ENCODE measurements at regions of chr1 and their contacts with region 1.

Region 1: DNA sequence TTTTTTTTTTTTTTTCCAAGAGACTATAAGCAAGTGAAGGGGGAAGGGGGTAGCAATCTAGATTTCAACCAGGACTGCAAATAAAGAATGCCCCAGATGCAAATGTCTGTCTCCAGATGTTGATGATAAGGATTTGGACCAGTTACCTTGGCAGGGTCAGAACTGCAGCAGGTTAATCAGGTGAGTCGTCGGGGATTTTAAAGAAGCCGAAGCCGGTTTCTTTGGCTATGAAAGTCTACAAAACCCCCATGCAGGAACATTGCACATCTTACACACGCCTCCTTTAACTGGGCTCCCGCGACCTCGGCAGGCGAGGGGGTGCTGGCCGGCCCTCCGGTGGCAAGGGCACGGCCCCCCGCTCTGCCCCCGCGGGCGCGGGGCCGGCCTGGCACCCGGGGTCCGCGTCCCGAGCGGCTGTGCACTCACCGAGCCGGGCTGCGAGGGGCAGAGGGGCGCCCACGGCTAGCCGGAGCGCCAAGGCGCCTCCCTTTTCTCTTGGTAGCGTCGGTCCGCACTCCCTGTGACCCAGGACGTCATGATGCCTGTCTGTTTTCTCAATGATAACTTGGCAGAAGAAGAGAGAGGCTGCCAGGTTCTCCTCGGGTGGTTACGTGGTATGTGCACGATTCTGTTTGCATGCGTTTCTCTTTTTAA is 366.3 kb upstream of the ESRRG start:
- DNase-seq: peak; percentile 61
- ATAC-seq: peak; percentile 84
- H3K4me3 ChIP-seq: peak overlapping the region; percentile 30
- H3K27ac ChIP-seq: no peak overlapping the region
- H3K4me1 ChIP-seq: peaks cover 4% of the 10 kb centered on the region; the same call in 1 of the 2 replicates
- H3K27me3 ChIP-seq: no peaks in the 10 kb centered on the region
- CTCF ChIP-seq: no peak
- POLR2A ChIP-seq: no peak
- RAD21 ChIP-seq: no peak

Region 2: GRCh38 chr1:217053676-217054075 is 35.8 kb before region 1 on chr1:
- CTCF ChIA-PET with region 1: no interaction called
- POLR2A ChIA-PET with region 1: interaction called, 10 read pairs
- dilution Hi-C with region 1: no loop called
- in situ Hi-C with region 1: no loop called
- intact Hi-C with region 1: no loop called
- DNase-seq: no peak
- ATAC-seq: no peak
- H3K4me3 ChIP-seq: no peak overlapping the region
- H3K27ac ChIP-seq: no peak overlapping the region
- H3K4me1 ChIP-seq: no peaks in the 10 kb centered on the region
- H3K27me3 ChIP-seq: no peaks in the 10 kb centered on the region
- CTCF ChIP-seq: no peak
- POLR2A ChIP-seq: no peak
- RAD21 ChIP-seq: no peak

Region 3: GRCh38 chr1:217076902-217077301 is 12.6 kb before region 1 on chr1:
- CTCF ChIA-PET with region 1: interaction called, 4 read pairs
- POLR2A ChIA-PET with region 1: interaction called, 11 read pairs
- dilution Hi-C with region 1: no loop called
- in situ Hi-C with region 1: no loop called
- intact Hi-C with region 1: no loop called
- DNase-seq: peak; percentile 77
- ATAC-seq: peak; percentile 85
- H3K4me3 ChIP-seq: no peak overlapping the region
- H3K27ac ChIP-seq: no peak overlapping the region
- H3K4me1 ChIP-seq: peaks cover 4% of the 10 kb centered on the region; the same call in 1 of the 2 replicates
- H3K27me3 ChIP-seq: no peaks in the 10 kb centered on the region
- CTCF ChIP-seq: no peak
- POLR2A ChIP-seq: no peak
- RAD21 ChIP-seq: no peak

Measured in IMR-90 (cell line).